PC-9 (cell line): ENCODE measurements at regions of chr7 and their contacts with region 1.

Region 1: DNA sequence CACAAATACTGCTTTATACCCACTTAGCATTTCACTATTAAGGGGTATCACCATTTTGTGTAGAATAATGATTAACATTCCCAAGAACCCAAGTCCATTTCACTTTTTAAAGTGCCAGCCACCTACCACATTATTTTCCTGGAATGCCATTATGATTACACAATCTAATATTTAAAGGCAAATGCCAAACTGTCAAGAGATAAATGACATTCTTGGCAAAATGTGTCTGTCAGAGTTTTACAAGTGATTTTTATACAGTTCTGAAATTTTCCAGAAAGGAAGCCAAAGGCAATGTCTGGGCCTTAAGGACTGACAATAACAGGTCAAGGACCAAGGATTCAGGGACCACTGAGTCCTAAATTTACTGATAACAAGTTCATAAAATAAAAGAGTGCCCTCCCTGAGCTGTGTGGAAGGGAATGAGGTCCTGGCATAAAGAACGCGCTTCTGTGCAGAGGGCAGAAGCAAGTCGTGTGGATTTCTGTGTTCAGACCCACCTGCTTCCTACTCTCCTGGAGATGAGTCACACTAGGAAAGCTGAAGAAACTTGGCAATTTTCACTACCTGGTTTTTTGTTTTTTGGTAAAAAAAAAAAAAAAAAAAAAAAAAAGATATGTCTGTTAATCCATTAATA is 66.5 kb downstream of the UBE2H start:
- DNase-seq: no peak
- H3K4me3 ChIP-seq: no peak overlapping the region
- H3K27ac ChIP-seq: no peak overlapping the region
- H3K4me1 ChIP-seq: no peaks in the 10 kb centered on the region
- H3K27me3 ChIP-seq: no peaks in the 10 kb centered on the region
- CTCF ChIP-seq: no peak

Region 2: GRCh38 chr7:129617652-129618051 is 268.6 kb before region 1 on chr7:
- CTCF ChIA-PET with region 1: interaction called, 19 read pairs
- POLR2A ChIA-PET with region 1: no interaction called
- intact Hi-C with region 1: no loop called
- DNase-seq: no peak
- H3K4me3 ChIP-seq: no peak overlapping the region
- H3K27ac ChIP-seq: no peak overlapping the region
- H3K4me1 ChIP-seq: peaks cover 20% of the 10 kb centered on the region
- H3K27me3 ChIP-seq: no peaks in the 10 kb centered on the region
- CTCF ChIP-seq: no peak

Region 3: GRCh38 chr7:129917934-129918333 is 31.6 kb after region 1 on chr7:
- CTCF ChIA-PET with region 1: no interaction called
- POLR2A ChIA-PET with region 1: interaction called, 14 read pairs
- intact Hi-C with region 1: no loop called
- DNase-seq: no peak
- H3K4me3 ChIP-seq: no peak overlapping the region
- H3K27ac ChIP-seq: no peak overlapping the region
- H3K4me1 ChIP-seq: no peaks in the 10 kb centered on the region; the same call in 1 of the 2 replicates
- H3K27me3 ChIP-seq: no peaks in the 10 kb centered on the region
- CTCF ChIP-seq: no peak